PC-3 (cell line): ENCODE measurements at regions of chr10 and their contacts with region 1.

Region 1: DNA sequence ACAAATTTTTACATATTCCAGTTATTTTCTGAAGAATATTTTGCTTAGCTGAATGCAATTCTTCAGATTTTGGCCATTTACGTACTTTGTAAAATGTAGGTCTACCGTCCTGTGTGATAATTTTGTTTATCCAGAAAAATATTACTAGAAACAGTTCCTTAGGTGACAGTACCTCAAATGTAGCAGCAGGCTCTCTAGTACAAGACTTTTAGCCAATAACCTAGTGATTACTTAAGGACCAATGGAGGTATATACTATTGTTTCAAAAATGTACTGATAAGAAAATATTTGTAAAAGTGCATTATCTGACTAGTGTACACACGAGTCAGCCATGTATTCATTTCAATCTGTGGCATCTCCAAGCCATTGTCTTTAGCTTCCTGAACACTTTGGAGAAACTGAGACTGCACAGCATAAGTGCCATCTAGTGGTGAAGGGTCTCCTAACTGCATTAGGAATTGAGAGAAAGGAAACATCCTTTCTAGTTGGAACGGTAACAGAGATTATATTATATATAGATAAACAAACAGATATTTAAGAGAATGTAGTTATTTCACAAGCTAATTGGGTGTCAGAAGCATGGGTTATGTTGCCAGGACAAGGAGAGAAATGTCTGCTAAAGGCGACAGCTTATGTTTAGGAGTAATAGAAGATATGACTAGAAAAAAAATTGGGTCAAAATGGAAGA is 23.7 kb downstream of the RTKN2 start:
- DNase-seq: peak; percentile 99
- ATAC-seq: peak; percentile 42
- H3K4me3 ChIP-seq: no peak overlapping the region
- H3K27ac ChIP-seq: peak overlapping the region; percentile 3
- H3K4me1 ChIP-seq: peaks cover 60% of the 10 kb centered on the region
- H3K27me3 ChIP-seq: no peaks in the 10 kb centered on the region
- CTCF ChIP-seq: peak; percentile 100

Region 2: DNA sequence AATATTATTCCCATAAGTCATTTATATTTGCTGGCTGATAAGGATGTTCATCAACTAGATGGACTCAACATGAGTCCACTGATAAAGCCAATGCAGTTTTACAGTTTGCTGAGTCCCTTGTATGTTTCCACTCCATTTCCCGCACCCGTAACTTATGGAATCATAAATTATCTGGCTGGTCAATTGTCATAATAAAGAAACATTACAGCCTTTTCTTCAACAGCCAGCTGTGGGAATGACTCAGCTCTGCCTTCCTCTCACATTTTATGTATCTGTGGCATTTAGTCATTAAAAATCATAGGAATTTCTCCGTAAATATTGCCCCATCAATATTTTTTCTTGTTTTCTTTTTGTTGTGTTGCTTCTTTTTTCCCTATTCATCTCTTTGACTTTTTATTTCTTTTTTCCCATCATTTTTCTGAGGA is 769.5 kb before region 1 on chr10:
- CTCF ChIA-PET with region 1: no interaction called
- POLR2A ChIA-PET with region 1: no interaction called
- intact Hi-C with region 1: loop called (anchors 10 kb)
- DNase-seq: peak; percentile 98
- ATAC-seq: peak; percentile 41
- H3K4me3 ChIP-seq: no peak overlapping the region
- H3K27ac ChIP-seq: no peak overlapping the region
- H3K4me1 ChIP-seq: peaks cover 36% of the 10 kb centered on the region
- H3K27me3 ChIP-seq: no peaks in the 10 kb centered on the region
- CTCF ChIP-seq: no peak

Region 3: GRCh38 chr10:61692447-61693010 is 552.4 kb before region 1 on chr10:
- CTCF ChIA-PET with region 1: no interaction called
- POLR2A ChIA-PET with region 1: no interaction called
- intact Hi-C with region 1: no loop called
- DNase-seq: no peak
- ATAC-seq: peak; percentile 27; the same call in 1 of the 2 replicates
- H3K4me3 ChIP-seq: no peak overlapping the region
- H3K27ac ChIP-seq: no peak overlapping the region
- H3K4me1 ChIP-seq: no peaks in the 10 kb centered on the region
- H3K27me3 ChIP-seq: no peaks in the 10 kb centered on the region
- CTCF ChIP-seq: no peak

Region 4: GRCh38 chr10:61903221-61903927 is 341.6 kb before region 1 on chr10:
- CTCF ChIA-PET with region 1: interaction called, 7 read pairs
- POLR2A ChIA-PET with region 1: interaction called, 11 read pairs
- intact Hi-C with region 1: loop called (anchors 1 kb)
- DNase-seq: peak; percentile 78
- ATAC-seq: peak; percentile 30
- H3K4me3 ChIP-seq: peak overlapping the region; percentile 75
- H3K27ac ChIP-seq: peak overlapping the region; percentile 52
- H3K4me1 ChIP-seq: peaks cover 30% of the 10 kb centered on the region
- H3K27me3 ChIP-seq: no peaks in the 10 kb centered on the region
- CTCF ChIP-seq: peak; percentile 66

Region 5: DNA sequence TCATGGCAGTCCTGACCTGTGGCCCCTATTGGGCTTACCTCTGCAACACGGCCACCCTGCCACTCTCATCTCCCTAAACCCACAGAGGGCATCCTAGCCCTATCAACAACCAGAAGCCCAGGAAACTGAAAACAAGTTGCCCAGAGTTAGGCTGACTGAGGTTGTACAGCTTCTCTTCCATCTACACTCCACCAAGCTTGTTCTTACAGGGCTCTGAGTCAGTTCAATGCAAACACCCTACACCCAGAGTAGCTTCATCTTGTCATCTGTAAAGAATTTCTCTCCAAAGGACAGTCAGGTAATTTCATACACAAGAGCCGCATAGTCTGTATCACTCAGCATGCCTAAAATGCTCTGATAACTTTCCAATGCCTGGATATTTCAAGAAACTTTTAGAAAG is 168.0 kb before region 1 on chr10:
- CTCF ChIA-PET with region 1: interaction called, 31 read pairs
- POLR2A ChIA-PET with region 1: interaction called, 4 read pairs
- intact Hi-C with region 1: loop called (anchors 1 kb)
- DNase-seq: peak; percentile 100
- ATAC-seq: peak; percentile 99
- H3K4me3 ChIP-seq: peak overlapping the region; percentile 31
- H3K27ac ChIP-seq: peak overlapping the region; percentile 61
- H3K4me1 ChIP-seq: peaks cover 45% of the 10 kb centered on the region
- H3K27me3 ChIP-seq: no peaks in the 10 kb centered on the region
- CTCF ChIP-seq: peak; percentile 95

Region 6: DNA sequence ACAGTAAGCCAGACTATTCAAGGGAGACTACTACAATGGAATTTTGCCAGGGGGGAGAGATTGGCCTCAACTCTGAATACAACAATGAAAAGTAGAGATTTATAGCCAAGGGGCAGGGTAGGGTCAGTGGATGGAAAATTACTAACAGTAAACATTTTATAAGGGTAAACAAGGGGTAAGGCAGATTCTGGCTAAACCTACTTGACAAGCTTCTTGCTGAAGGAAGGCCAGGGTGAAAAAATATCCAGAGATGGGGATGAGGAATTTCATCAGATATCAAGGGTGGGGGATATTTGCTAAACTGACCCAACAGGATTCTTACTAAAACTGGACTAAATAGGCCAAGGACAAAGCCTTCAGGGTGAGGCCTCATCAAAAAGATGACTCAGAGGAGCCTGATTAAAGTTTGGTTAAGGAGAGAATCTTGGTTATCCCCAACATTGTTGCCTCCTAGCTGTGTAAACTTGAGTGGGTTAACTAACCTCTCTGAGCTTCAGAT is 132.6 kb before region 1 on chr10:
- CTCF ChIA-PET with region 1: interaction called, 3 read pairs
- POLR2A ChIA-PET with region 1: no interaction called
- intact Hi-C with region 1: loop called (anchors 1 kb)
- DNase-seq: peak; percentile 100
- ATAC-seq: peak; percentile 83
- H3K4me3 ChIP-seq: no peak overlapping the region
- H3K27ac ChIP-seq: peak overlapping the region; percentile 62
- H3K4me1 ChIP-seq: peaks cover 74% of the 10 kb centered on the region
- H3K27me3 ChIP-seq: no peaks in the 10 kb centered on the region
- CTCF ChIP-seq: no peak

Region 7: DNA sequence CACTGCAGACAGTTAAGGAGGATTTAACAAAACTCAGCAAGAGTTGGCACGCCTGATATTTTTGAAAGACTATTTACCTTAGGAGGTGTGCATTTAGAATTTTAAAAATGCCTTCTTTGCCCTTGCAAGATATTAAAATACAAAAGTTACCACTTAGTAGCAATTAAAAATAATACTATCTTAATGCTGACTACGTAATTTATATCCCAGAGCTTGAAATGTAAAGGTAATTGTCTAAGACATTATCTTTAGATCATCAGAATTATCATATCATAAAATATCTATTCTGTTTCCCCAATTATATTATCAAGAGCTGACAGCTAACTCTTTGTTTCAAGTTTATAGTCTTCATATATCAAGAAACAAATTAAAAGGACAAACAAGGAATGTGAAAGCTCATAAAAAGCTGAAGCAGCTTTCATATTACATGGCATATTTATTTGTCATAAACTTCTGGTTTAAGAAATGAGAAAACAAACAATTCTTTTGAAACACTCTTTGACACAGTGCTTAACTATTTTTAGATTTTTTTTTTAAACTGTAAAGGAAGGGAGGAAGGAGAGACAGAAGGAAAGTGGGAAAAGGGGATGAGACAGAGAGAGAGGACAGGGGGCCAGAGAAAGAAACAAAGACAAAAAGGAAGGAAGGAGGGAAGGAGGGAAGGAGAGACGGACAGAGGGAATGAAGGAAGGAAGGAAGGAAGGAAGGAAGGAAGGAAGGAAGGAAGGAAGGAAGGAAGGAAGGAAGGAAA is 49.8 kb before region 1 on chr10:
- CTCF ChIA-PET with region 1: no interaction called
- POLR2A ChIA-PET with region 1: interaction called, 8 read pairs
- intact Hi-C with region 1: loop called (anchors 1 kb)
- DNase-seq: peak; percentile 38
- ATAC-seq: peak; percentile 74
- H3K4me3 ChIP-seq: no peak overlapping the region
- H3K27ac ChIP-seq: no peak overlapping the region
- H3K4me1 ChIP-seq: peaks cover 6% of the 10 kb centered on the region
- H3K27me3 ChIP-seq: no peaks in the 10 kb centered on the region
- CTCF ChIP-seq: no peak

Region 8: DNA sequence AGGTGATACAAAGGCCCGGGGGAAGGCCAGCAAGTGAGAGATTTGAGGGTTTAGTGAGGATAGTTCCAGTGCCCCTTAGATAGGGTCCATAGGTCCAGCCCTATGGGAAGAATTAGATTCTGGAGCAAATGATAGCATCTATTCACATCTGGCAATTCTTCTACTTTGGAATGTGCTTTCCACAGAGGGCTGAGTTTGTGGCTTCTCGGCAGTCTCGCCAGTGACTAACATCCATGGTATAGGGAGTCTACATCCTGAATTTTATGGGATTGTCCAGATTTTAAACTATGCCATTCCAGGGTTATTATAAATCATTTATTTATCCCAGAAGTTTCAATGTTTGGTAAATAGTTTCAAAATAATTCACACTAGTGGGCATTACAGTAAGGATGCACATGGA is 352.3 kb after region 1 on chr10:
- CTCF ChIA-PET with region 1: no interaction called
- POLR2A ChIA-PET with region 1: no interaction called
- intact Hi-C with region 1: no loop called
- DNase-seq: peak; percentile 92
- ATAC-seq: peak; percentile 78
- H3K4me3 ChIP-seq: no peak overlapping the region
- H3K27ac ChIP-seq: no peak overlapping the region
- H3K4me1 ChIP-seq: peaks cover 11% of the 10 kb centered on the region
- H3K27me3 ChIP-seq: no peaks in the 10 kb centered on the region
- CTCF ChIP-seq: no peak

Region 9: GRCh38 chr10:62816331-62817120 is 571.6 kb after region 1 on chr10 and contains the start of gene EGR2:
- CTCF ChIA-PET with region 1: no interaction called
- POLR2A ChIA-PET with region 1: no interaction called
- intact Hi-C with region 1: loop called (anchors 5 kb)
- DNase-seq: peak; percentile 100
- ATAC-seq: peak; percentile 76
- H3K4me3 ChIP-seq: peak within 1 kb of the TSS; percentile 69
- H3K27ac ChIP-seq: peak within 1 kb of the TSS; percentile 37
- H3K4me1 ChIP-seq: peaks cover 22% of the 10 kb centered on the region
- H3K27me3 ChIP-seq: no peaks in the 10 kb centered on the region
- CTCF ChIP-seq: no peak; the same call in 1 of the 2 replicates
- total RNA-seq, gene EGR2: 2.7 and 2.8 TPM in 2 replicates